A549 (cell line): ENCODE measurements at regions of chr1 and their contacts with region 1.

Region 1: DNA sequence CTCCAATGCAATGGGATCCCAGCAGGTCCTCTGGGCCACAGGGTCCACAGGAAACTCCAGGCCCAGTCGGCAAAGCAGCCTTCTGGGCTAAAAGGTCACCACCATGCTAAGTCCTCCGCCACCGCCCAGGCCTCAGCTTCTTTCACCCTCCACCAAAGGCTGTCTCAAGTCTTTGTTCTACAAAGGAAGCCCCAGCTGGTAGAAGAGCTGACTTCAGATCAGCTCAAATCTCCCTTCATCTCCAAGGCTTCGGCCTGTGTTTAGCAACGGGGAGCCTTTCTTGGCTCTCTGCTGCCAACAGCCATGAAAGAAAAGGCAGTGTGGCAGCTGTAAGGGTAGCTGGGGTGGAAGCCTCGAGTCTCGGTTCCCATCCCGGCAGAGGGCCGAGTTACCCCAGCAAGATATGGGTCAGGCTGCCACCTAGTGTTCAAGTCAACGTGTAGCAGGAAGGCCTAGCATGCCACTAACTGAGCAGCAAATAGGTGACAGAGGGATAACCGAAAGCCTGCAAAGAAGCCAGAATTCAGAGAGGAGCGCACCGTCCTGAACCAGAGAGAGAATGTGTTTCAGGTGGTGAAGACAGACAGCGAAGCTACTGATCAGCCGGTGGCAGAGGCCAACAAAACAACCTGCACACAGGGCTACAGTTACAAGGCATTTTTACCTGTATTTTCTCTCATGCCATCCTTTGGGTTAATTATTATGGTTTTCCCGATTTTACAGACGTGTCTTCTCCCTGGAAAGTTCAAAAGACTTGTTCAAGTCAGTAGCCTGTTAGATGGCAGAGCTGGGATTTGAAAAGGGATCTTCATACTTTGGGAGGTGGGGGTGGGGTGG is 26.8 kb upstream of the CRNN start:
- DNase-seq: peak; percentile 77 to 89
- ATAC-seq: peak; percentile 97 to 99
- H3K4me3 ChIP-seq: no peak overlapping the region
- H3K27ac ChIP-seq: no peak overlapping the region
- H3K4me1 ChIP-seq: no peaks in the 10 kb centered on the region
- CTCF ChIP-seq: peak; percentile 85
- EP300 ChIP-seq: no peak
- POLR2A ChIP-seq: no peak
- RAD21 ChIP-seq: peak; percentile 80

Region 2: DNA sequence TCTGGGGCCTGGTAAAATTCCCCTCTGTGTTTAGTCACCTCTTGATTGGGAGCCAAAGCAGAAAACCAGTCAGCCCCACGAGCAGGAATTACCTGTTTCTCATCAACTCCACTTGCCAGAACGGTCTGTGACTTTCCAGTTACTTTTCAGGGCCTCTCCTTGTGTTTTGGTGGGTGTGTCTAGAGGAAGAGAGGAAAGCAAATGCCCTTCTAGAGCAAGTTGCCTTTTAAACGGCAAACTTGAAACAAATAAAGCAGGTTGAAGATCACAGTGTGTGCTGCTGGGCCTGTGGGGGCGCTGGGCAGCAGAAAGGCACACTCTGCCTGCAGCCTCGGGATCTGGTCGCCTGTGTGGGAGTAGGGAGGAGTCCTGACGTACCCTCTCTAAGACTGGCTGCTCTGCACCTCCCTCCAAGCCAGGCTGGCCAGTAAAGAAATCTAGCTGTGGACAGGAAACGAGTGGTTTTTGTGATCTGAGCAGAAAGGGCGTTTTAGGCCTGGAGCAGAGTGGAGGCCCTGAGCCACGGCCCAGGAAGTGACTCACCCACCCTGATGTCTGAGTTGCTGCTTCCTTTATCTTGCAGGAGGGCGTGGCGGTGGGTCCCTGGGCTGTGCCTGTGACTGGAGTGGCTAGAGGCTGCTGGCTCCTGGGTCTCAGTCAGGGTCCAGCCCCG is 393.0 kb before region 1 on chr1:
- CTCF ChIA-PET with region 1: interaction called, 12 read pairs
- POLR2A ChIA-PET with region 1: no interaction called
- DNase-seq: peak; percentile 83 to 100
- ATAC-seq: peak; percentile 95
- H3K4me3 ChIP-seq: peak overlapping the region; percentile 43
- H3K27ac ChIP-seq: peak overlapping the region; percentile 95 to 96
- H3K4me1 ChIP-seq: peaks cover 45% of the 10 kb centered on the region
- CTCF ChIP-seq: peak; percentile 57; the same call in 2 of the 3 replicates
- EP300 ChIP-seq: no peak; a peak in 1 of 5 replicates
- POLR2A ChIP-seq: peak; percentile 66
- RAD21 ChIP-seq: peak; percentile 32 to 45; a peak in 4 of 5 replicates

Region 3: GRCh38 chr1:152141974-152142584 is 298.8 kb before region 1 on chr1:
- CTCF ChIA-PET with region 1: interaction called, 13 read pairs
- POLR2A ChIA-PET with region 1: no interaction called
- DNase-seq: peak; percentile 38 to 78
- ATAC-seq: peak; percentile 92 to 94
- H3K4me3 ChIP-seq: no peak overlapping the region
- H3K27ac ChIP-seq: no peak overlapping the region
- H3K4me1 ChIP-seq: no peaks in the 10 kb centered on the region
- CTCF ChIP-seq: peak; percentile 98
- EP300 ChIP-seq: no peak
- POLR2A ChIP-seq: no peak
- RAD21 ChIP-seq: peak; percentile 96 to 97

Region 4: DNA sequence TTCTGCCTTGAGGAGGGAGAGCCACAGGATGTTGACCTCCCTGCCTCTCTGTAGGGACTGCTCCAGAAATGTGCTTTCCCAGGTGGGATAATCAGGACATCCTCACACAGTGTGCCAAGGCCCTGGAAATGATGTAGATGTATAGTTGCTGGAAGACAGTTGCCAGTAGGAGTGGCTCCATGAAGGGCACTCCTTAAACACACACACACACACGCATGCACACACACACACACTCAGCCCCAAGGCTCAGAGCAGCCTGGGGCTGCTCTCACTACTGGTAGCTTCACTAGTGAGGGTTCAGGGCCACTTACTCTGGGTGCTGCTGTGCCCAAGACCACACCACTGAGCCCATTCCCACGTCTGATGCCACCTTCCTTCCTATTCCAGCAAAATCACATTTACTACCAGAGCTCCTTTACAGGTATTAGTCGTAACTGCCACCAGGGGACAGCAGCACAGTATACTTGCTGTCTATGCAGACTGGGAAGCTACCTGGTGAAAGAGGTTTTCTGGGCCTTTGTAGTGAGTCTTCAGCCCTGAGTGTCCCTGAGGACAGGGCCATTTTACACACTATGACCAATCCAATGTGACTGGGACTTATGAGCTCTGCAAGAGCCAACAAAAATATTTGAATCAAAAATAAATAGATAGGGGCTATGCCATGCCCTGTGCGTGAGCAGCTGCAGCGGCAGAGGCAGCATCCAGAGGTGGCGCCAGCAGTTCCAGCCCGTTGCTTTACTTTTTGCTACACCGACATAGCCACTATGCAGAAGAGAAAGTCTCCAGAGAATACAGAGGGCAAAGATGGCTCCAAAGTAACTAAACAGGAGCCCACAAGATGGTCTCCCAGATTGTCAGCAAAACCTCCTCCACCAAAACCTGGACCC is 41.8 kb before region 1 on chr1:
- CTCF ChIA-PET with region 1: interaction called, 25 read pairs
- POLR2A ChIA-PET with region 1: no interaction called
- DNase-seq: peak; percentile 44 to 66
- ATAC-seq: peak; percentile 98 to 99
- H3K4me3 ChIP-seq: no peak overlapping the region
- H3K27ac ChIP-seq: no peak overlapping the region
- H3K4me1 ChIP-seq: no peaks in the 10 kb centered on the region; the same call in 2 of the 3 replicates
- CTCF ChIP-seq: peak; percentile 61
- EP300 ChIP-seq: no peak
- POLR2A ChIP-seq: no peak
- RAD21 ChIP-seq: peak; percentile 52 to 63; a peak in 4 of 5 replicates

Region 5: DNA sequence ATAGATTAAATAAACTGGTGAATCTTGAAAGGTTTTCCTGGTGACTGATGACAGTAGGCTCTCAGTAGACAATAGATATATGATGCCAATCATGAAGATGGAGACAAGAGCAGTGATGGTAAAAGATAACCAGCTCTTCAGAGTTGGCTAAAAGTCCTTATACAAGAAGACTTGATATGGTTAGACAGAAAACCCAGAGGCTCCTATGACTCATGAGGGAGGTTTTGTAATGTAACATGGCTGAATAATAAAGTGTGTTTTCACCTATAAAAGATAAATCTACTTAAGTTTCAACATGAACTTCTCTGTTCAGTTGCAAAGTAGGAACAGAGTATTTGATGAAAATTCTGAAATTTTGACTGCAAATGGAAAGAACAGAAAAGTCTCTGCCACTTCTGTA is 14.1 kb before region 1 on chr1:
- CTCF ChIA-PET with region 1: interaction called, 14 read pairs
- POLR2A ChIA-PET with region 1: no interaction called
- DNase-seq: no peak
- ATAC-seq: no peak
- H3K4me3 ChIP-seq: no peak overlapping the region
- H3K27ac ChIP-seq: no peak overlapping the region
- H3K4me1 ChIP-seq: no peaks in the 10 kb centered on the region
- CTCF ChIP-seq: no peak
- EP300 ChIP-seq: no peak
- POLR2A ChIP-seq: no peak
- RAD21 ChIP-seq: no peak

Region 6: GRCh38 chr1:152451254-152451653 is 10.4 kb after region 1 on chr1:
- CTCF ChIA-PET with region 1: interaction called, 20 read pairs
- POLR2A ChIA-PET with region 1: no interaction called
- DNase-seq: no peak
- ATAC-seq: peak; percentile 70 to 77; a peak in 4 of 6 replicates
- H3K4me3 ChIP-seq: no peak overlapping the region
- H3K27ac ChIP-seq: no peak overlapping the region
- H3K4me1 ChIP-seq: no peaks in the 10 kb centered on the region
- CTCF ChIP-seq: no peak
- EP300 ChIP-seq: no peak
- POLR2A ChIP-seq: no peak
- RAD21 ChIP-seq: 0 out of 5 replicates have a peak, but pooled peaks of 1 of the 2 experiments have one; percentile 16

Region 7: DNA sequence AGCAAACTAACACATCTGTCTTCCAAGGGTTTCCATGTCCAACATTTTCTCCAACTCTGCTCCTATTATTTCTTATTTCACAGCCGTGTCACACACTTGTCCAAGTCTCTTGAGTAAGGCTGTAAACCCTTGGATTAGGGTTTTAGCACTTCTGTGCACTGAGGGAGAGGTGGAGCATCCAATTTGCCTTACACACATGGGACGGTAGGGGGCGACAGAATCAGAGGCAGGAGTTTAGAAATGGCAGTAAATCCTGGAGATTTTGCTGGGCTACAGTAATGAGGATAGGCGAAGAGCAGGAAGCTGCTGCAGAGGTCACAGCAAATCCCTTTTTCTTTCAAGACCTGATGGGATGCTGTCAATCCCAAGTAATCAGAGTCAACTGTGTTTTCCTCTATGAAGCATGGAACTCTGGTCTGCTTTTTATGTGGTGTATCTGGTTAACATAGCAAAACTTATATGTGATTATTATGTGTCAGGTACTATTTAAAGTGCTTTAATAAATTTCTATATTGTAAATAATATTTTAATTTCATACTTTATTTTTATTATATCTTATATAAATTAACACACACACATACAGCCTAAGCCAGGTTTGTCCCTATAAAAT is 54.3 kb after region 1 on chr1:
- CTCF ChIA-PET with region 1: no interaction called
- POLR2A ChIA-PET with region 1: no interaction called
- DNase-seq: peak in 1 of 2 experiments; percentile 30
- ATAC-seq: no peak
- H3K4me3 ChIP-seq: no peak overlapping the region
- H3K27ac ChIP-seq: no peak overlapping the region
- H3K4me1 ChIP-seq: peaks cover 16% of the 10 kb centered on the region
- CTCF ChIP-seq: no peak
- EP300 ChIP-seq: no peak
- POLR2A ChIP-seq: no peak
- RAD21 ChIP-seq: 0 out of 5 replicates have a peak, but pooled peaks of 1 of the 2 experiments have one; percentile 11